Mammary epithelial cell (primary cell): ENCODE measurements at regions of chr2 and their contacts with region 1.

Region 1: DNA sequence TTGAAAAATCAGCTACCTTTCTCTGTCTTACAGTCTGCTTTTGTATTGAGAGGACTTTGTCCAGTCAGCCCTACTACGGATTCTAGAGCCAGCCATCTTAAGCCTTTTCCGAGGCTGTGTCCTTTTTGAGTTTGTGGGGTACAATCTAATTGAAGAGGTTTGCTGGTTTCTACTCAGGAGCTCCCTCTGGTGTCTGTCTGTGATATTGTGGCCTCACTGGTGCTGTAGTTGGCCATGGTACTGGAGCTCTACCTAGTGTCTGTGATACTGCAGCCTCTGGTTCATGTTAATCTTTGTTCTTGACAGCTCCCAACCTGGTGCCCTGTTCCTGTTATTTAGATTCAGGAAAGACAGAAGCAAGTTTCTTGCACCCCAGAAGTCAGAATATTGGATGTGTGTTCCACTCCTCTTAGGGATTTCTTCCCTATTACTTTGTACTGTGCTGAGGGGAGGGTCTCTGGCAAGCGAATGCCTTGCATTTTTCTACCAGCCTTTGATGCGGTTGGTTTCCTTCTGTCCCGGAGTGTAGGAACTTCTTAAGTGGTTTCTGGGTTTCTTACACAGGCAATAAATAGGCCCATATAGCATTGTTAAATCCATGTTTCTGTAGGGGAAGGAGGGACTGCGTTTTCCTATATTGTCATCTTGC is 78.5 kb downstream of the ACSL3 start:
- DNase-seq: peak; percentile 62
- H3K4me3 ChIP-seq: no peak overlapping the region
- H3K27ac ChIP-seq: no peak overlapping the region
- H3K4me1 ChIP-seq: peaks cover 12% of the 10 kb centered on the region
- H3K27me3 ChIP-seq: no peaks in the 10 kb centered on the region
- CTCF ChIP-seq: peak; percentile 87 to 92

Region 2: GRCh38 chr2:222690564-222691200 is 248.7 kb before region 1 on chr2:
- CTCF ChIA-PET with region 1: interaction called, 4 read pairs
- dilution Hi-C with region 1: no loop called
- in situ Hi-C with region 1: no loop called
- intact Hi-C with region 1: loop called (anchors 1 kb)
- DNase-seq: peak; percentile 45
- H3K4me3 ChIP-seq: no peak overlapping the region
- H3K27ac ChIP-seq: no peak overlapping the region
- H3K4me1 ChIP-seq: no peaks in the 10 kb centered on the region
- H3K27me3 ChIP-seq: no peaks in the 10 kb centered on the region
- CTCF ChIP-seq: peak; percentile 100

Region 3: DNA sequence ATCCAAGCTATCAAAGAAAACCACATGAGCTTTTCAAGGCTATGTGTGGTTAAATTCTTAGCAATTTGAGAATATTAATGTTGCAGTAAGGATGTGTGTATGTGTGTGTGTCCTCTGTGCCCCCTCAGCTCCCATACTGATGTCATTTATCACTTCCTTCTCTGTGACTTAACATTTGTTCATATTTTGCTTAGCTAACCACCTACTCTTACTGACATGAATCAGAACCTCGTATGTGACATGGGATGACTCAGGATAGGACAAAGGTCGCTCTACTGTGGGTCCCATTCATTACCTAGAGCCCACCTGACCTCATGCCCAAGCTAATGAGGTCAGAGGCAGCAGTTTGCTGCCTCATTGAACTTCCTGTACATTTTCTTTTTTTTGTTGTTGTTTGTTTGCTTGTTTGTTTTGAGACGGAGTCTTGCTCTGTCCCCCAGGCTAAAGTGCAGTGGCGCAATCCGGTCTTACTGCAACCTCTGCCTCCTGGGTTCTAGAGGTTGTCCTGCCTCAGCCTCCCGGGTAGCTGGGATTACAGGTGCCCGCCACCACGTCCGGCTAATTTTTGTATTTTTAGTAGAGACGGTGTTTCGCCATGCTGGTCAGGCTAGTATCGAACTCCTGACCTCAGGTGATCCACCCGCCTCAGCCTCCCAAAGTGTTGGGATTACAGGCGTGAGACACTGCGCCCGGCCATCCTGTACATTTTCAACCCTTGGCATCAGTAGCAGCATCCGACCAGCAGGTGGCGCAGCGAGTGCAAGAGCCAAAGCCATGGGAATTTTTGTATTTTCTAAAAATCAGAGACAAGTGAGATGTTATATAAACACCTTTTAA is 231.4 kb before region 1 on chr2:
- CTCF ChIA-PET with region 1: no interaction called
- dilution Hi-C with region 1: no loop called
- in situ Hi-C with region 1: no loop called
- intact Hi-C with region 1: loop called (anchors 1 kb)
- DNase-seq: peak; percentile 68
- H3K4me3 ChIP-seq: no peak overlapping the region
- H3K27ac ChIP-seq: no peak overlapping the region
- H3K4me1 ChIP-seq: peaks cover 8% of the 10 kb centered on the region
- H3K27me3 ChIP-seq: no peaks in the 10 kb centered on the region
- CTCF ChIP-seq: peak; percentile 83 to 91

Region 4: DNA sequence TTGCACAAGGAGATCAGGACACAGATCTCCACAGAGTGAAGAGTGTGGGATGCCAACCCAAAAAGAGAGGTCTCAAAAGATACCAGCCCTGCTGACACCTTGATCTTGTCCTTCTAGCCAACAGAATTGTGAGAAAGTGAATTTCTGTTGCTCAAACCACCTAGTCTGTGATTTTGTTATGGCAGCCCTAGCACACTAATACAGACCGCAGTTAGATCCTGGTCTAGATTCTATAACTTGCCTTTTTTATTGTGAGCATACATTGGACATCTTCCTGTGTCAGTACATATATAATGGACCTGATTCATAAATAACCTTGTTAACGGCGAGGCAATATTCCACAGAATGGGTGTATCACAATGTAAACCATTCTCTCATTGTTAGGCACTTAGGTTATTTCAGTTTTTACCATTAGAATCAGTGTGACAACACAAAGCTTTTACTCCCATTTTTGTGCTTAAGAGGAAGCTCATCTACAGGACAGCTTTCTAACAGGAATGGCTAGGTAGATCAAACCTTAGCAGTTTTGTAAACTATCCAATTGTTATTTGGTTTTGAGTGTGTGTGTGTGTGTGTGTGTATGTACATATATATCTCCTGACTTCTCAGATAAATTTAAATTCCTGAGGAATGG is 10.5 kb after region 1 on chr2:
- CTCF ChIA-PET with region 1: interaction called, 10 read pairs
- dilution Hi-C with region 1: no loop called
- in situ Hi-C with region 1: no loop called
- intact Hi-C with region 1: no loop called
- DNase-seq: no peak
- H3K4me3 ChIP-seq: no peak overlapping the region
- H3K27ac ChIP-seq: no peak overlapping the region
- H3K4me1 ChIP-seq: peaks cover 16% of the 10 kb centered on the region
- H3K27me3 ChIP-seq: no peaks in the 10 kb centered on the region
- CTCF ChIP-seq: no peak

Region 5: GRCh38 chr2:222959336-222959735 is 20.0 kb after region 1 on chr2:
- CTCF ChIA-PET with region 1: no interaction called
- dilution Hi-C with region 1: no loop called
- in situ Hi-C with region 1: no loop called
- intact Hi-C with region 1: loop called (anchors 2 kb)
- DNase-seq: peak; percentile 83
- H3K4me3 ChIP-seq: no peak overlapping the region
- H3K27ac ChIP-seq: peak overlapping the region; percentile 15
- H3K4me1 ChIP-seq: peaks cover 22% of the 10 kb centered on the region
- H3K27me3 ChIP-seq: no peaks in the 10 kb centered on the region
- CTCF ChIP-seq: peak; percentile 58 to 65